Left ventricle myocardium superior (tissue), 1 donor: ENCODE measurements at regions of chr17 and their contacts with region 1.

Region 1: DNA sequence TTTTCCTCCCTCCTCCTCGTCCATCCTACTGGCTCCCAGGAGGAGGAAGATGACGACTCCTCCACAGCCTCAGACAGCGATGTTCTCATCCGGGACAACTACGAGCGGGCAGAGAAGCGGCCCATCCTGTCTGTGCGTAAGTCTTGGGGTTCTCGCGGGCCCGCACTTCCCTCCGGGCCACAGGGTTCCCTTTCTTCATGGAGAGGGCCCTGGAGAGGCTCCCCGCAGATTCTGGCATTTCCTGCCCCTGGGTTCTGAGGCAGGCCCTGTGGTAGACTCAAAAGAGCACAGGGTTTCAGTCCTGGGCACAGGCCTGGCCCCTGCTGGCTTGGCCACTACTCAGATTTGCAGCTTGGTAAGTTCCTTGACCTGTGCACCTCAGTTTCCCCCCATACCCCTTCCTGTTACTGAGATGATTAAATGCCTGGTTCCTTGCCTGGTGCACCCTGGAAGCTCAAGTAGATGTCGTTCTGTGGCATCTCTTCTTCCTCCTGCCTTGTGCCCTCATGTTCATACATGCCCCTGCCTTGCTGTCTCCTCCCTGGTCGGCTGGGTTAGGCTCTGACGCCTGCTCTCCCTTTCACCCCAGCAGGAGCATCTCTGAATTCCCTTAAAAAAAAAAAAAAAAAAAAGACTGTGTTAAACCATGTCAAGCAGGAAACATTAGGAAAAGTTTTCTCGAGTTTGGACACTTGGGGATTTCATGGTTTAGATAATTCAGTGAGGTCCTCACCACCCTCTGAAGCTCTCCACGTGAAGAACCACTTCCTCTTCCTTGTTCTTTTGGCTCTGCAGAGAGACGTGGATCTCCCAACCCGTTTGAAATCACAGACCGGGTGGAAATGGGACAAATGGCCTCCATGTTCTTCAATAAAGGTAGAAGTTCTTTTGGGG is 14.3 kb upstream of the NAT9 start:
- DNase-seq: no peak
- ATAC-seq: peak; percentile 21

Region 2: DNA sequence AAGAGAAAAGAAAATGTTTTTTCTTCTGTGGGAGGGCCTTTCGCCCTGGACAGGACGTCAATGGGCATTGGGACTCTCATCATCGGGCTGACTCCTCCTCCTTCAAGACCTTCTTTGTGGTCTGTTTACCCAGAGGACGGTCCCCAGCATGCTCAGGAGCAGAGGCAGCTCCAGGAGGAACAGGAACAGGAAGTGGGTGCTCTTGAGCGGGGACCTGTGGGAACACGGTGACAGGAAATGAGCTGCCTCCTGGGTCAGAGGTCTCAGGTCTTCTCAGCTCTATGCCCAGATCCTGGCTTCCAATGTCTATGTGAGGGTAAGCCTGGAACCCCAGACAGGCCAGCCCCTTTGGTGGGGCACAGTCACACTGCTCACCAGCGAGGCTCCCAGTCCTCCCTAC is 210.5 kb before region 1 on chr17:
- intact Hi-C with region 1: no loop called
- DNase-seq: no peak
- ATAC-seq: no peak

Region 3: DNA sequence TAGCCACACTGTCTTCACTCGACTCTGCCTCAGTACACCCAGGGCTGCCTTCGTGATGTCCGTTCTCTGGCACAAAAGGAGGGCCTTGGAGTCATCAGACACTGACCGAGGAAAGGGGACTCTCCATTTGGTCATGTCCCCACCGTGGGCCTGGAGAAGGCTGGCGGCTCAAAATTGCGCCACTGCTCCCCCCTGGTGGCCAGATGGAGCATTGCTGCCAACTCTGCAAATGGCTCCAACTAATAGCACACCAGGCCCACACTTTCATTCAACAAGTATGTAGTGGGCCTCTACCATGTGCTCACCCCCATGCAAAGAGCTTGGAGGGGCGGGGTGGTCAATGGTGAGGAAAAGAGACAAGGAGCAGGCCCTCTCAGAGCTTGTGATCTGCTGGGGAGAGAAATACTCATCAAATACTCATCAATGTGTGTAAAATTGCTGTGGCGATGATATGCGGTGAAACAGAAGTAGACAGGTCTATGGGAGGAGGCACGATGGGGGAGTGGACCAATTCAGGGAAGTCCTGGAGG is 74.5 kb after region 1 on chr17:
- intact Hi-C with region 1: loop called (anchors 5 kb)
- DNase-seq: peak; percentile 84
- ATAC-seq: peak; percentile 72